Right ventricle myocardium superior (tissue), 1 donor: ENCODE measurements at regions of chr17 and their contacts with region 1.

Region 1: GRCh38 chr17:42517516-42517915 is 18.5 kb upstream of the NAGLU start:
- DNase-seq: peak; percentile 94
- ATAC-seq: peak; percentile 65

Region 2: GRCh38 chr17:42315402-42316156 is 201.9 kb before region 1 on chr17:
- intact Hi-C with region 1: loop called (anchors 5 kb)
- DNase-seq: no peak
- ATAC-seq: no peak

Region 3: GRCh38 chr17:42405963-42406495 is 111.5 kb before region 1 on chr17:
- intact Hi-C with region 1: loop called (anchors 5 kb)
- DNase-seq: peak; percentile 93
- ATAC-seq: peak; percentile 76

Region 4: GRCh38 chr17:42428141-42428944 is 89.2 kb before region 1 on chr17:
- intact Hi-C with region 1: loop called (anchors 5 kb)
- DNase-seq: no peak
- ATAC-seq: peak; percentile 67

Region 5: DNA sequence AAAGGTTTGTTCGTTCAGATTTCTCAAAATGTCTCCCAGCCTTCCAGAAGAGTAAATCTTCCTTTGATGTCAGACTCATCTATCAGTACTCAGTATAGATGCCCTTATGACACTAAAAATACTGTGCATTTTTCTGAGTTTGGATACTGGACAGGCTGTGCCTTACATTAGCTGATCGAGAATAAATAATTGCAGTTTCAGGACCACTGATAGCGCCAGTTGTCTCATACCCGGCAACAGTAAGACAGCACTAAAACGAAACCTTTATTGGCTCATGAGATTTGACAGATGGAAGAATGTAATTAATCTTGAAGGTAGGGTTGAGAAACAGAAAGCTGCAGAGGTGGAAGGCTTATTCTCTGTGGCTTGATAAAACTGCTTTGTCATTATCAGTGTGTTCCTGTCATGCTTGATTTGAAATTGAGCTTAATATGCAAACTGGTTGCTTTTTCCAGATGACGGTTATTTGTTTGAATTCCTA is 57.7 kb before region 1 on chr17:
- intact Hi-C with region 1: loop called (anchors 5 kb)
- DNase-seq: no peak
- ATAC-seq: peak; percentile 23

Region 6: DNA sequence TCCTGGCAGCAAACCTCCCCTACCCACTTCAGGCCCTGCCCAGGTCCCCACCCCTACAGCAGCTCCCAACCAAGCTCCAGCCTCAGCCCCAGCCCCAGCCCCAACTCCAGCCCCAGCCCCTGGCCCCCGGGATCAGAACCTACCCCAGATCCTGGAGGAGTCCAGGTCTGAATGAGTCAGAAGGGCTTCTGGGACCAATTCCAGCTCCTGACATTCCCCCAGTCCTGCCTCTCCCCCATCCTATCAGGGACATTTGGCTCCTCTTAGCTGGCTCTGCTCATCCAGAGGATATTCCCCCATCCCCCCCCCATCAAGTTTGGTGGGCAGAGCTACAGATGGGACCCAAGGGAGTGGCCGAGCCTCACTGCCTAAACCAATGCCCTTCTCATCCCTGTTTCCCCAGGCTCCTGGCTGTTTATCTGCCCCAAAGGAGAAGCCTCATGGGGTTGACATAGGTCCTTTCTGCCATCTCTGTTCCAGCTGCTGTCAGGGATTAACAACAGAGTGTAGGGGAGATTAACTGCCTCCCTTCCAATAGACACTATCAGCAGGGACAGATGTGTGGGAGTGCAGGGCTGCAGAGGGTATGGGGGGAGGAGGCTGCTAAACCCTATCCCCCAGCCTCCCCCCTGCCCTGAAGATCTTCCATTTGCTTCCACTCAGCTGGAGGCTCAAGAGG is 181.4 kb after region 1 on chr17:
- intact Hi-C with region 1: no loop called
- DNase-seq: no peak
- ATAC-seq: peak; percentile 77